GM12878 (cell line): ENCODE measurements at regions of chr4 and their contacts with region 1.

Region 1: DNA sequence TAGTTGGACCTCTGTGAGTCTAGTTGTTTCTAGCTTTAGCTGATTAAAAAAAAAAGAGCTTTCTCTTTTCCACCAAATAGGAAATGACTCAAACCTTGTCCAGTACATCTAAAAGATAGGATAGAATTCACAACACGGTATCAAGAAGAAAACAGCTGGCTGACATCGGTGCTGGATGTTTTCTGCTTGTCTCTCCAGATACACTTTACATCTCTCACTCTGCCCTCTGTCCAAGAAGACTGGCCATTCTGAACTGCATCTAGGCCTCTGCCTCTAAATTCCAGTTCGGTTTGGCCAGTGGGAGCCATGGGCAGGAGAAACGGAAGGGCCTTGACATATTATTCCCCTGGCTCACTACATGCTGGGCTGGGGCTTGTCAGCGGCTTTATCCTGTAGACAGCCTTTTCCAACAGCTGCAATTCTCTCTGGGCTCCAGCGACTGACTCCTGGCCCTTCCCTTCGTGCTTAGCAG is 57.3 kb upstream of the SHISA3 start:
- DNase-seq: no peak
- ATAC-seq: no peak
- H3K4me3 ChIP-seq: no peak overlapping the region
- H3K27ac ChIP-seq: no peak overlapping the region
- H3K4me1 ChIP-seq: peaks cover 14% of the 10 kb centered on the region
- H3K27me3 ChIP-seq: no peaks in the 10 kb centered on the region; a peak in 1 of 4 replicates
- CTCF ChIP-seq: no peak
- EP300 ChIP-seq: no peak
- POLR2A ChIP-seq: no peak
- RAD21 ChIP-seq: no peak

Region 2: DNA sequence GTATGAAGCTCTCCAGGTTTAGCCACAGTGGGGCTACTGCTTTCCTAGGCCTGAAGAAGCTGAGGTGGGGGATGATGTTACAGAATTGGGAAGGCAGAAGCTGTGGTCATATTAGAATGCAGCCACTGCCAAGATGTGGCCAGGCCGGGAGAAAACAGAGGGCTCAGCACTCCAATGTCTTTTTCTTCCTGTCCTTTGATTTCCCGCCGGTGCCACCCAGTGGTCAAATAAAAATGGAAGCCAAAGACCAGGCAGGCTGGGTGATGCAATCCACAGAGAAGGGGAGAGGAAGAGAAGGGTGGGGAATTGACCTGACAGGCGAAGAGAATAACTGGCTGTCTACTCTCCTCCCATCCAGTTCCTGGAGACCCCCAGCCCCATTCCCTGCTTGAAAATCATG is 37.6 kb before region 1 on chr4:
- CTCF ChIA-PET with region 1: no interaction called
- POLR2A ChIA-PET with region 1: no interaction called
- RAD21 ChIA-PET with region 1: no interaction called
- SMC1A ChIA-PET with region 1: no interaction called
- in situ Hi-C with region 1: no loop called
- intact Hi-C with region 1: loop called (anchors 5 kb)
- DNase-seq: no peak
- ATAC-seq: peak; percentile 65
- H3K4me3 ChIP-seq: no peak overlapping the region
- H3K27ac ChIP-seq: no peak overlapping the region
- H3K4me1 ChIP-seq: no peaks in the 10 kb centered on the region
- H3K27me3 ChIP-seq: no peaks in the 10 kb centered on the region
- CTCF ChIP-seq: peak; percentile 37 to 45 (median 41)
- EP300 ChIP-seq: no peak
- POLR2A ChIP-seq: no peak
- RAD21 ChIP-seq: peak; percentile 42